ENCODE measurements at regions of chr11 and their contacts with region 1.

Region 1: GRCh38 chr11:6667733-6668374 is 12.2 kb upstream of the DCHS1 start:
- DNase-seq: peak in 1 of 2 experiments; percentile 45
- H3K4me3 ChIP-seq: no peak overlapping the region
- H3K4me3 Mint-ChIP-seq: no peak overlapping the region
- H3K27ac Mint-ChIP-seq: no peak overlapping the region
- H3K4me1 ChIP-seq: no peaks in the 10 kb centered on the region
- H3K4me1 Mint-ChIP-seq: no peaks in the 10 kb centered on the region
- H3K27me3 ChIP-seq: no peaks in the 10 kb centered on the region
- H3K27me3 Mint-ChIP-seq: peaks cover 15% of the 10 kb centered on the region
- CTCF ChIP-seq: peak; percentile 62 to 64

Region 2: DNA sequence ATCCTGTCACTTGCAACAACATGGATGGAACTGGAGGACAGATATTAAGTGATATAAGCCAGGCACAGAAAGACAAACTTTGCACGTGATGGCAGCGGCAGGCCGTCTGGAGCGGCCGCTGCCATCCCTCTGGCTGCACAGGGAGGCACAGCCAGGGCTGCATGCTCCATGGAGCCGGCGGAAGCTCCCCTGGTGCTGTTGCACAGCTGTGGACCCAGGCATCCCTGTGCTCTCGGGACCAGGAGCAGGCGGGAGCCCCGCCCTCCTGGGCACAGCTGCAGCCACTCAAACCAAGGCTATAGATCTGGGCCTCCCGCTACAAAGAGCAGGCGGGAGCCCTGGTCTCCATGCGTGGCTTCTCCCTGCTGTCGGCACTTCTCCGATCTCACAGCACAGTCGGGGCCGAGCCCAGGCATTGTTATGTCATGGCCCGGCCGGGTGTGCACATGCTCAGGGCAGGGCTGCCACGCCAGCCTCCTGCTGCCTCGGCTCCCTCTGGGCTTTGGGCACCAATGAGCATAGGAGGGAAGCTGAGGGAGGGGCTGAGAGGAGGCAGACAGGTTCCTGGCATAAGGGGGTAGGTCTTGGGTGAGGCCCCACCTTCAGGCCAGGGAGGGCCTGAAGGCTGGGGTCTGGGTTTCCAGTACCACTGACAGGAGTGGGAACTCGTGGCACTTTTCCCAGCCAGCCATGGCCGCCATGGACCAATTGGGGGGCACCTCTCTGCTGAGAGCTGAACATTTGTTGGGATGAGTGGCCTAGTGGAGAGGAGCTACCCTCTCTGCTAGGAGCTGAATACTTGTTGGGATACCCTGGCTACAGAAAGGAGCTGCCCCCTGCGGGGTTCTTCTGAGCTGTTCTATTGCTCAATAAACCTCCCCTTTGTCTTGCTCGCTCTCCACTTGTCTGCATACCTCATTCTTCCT is 81.2 kb before region 1 on chr11:
- CTCF ChIA-PET with region 1: no interaction called
- POLR2A ChIA-PET with region 1: no interaction called
- intact Hi-C with region 1: no loop called
- DNase-seq: no peak
- H3K4me3 ChIP-seq: no peak overlapping the region
- H3K4me3 Mint-ChIP-seq: no peak overlapping the region
- H3K27ac Mint-ChIP-seq: no peak overlapping the region
- H3K4me1 ChIP-seq: no peaks in the 10 kb centered on the region
- H3K4me1 Mint-ChIP-seq: no peaks in the 10 kb centered on the region
- H3K27me3 ChIP-seq: no peaks in the 10 kb centered on the region
- H3K27me3 Mint-ChIP-seq: no peaks in the 10 kb centered on the region
- CTCF ChIP-seq: no peak

Region 3: GRCh38 chr11:6629892-6630633 is 37.8 kb before region 1 on chr11:
- CTCF ChIA-PET with region 1: no interaction called
- POLR2A ChIA-PET with region 1: no interaction called
- intact Hi-C with region 1: loop called (anchors 1 kb)
- DNase-seq: peak; percentile 58 to 72
- H3K4me3 ChIP-seq: peak overlapping the region; percentile 62
- H3K4me3 Mint-ChIP-seq: peak overlapping the region; percentile 72
- H3K27ac Mint-ChIP-seq: no peak overlapping the region
- H3K4me1 ChIP-seq: peaks cover 3% of the 10 kb centered on the region; the same call in 1 of the 2 replicates
- H3K4me1 Mint-ChIP-seq: no peaks in the 10 kb centered on the region
- H3K27me3 ChIP-seq: no peaks in the 10 kb centered on the region; the same call in 1 of the 2 replicates
- H3K27me3 Mint-ChIP-seq: no peaks in the 10 kb centered on the region
- CTCF ChIP-seq: no peak

Region 4: DNA sequence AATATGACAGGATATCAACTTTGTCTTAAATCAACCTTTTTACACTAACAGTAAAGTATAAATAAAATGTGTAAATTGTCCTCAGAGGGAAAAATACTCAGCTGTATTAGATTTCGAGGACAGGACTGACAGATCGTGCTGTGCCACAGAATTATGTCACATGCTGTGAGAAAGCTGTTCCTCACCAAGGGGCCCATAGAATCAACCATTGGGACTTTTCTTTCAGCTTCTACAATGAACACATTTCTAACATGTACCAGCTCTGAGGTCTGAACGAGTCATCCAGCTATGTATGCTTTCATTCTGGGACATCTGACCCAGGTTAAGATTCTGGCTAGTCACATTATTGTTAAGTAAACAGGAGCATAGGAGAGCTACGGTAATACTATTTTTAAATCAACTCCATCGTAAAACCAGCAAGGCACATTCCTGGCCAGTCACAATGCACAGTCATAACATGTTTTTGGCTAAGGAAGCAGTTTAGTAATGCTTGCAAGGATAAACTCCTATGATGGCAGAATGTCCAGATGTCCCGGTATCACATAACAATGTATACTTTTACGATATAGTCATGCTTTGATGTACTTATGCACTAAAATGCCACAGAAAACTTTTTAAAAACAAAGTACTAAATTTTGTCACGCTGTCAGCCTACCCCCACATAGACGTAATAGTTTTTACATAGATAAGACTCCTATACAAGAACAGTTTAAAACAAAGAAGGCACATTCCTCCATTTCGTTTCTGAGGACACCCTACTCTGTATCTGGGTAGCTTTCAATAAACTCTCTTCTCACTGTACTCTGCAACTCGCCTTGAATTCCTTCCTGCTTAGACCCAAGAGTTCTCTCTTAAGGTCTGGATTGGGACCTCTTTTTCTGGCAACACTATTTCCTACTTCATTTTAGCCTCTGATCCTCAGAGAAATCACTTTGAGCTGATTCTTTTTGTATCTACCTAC is 324.9 kb after region 1 on chr11:
- CTCF ChIA-PET with region 1: no interaction called
- POLR2A ChIA-PET with region 1: no interaction called
- intact Hi-C with region 1: no loop called
- DNase-seq: no peak
- H3K4me3 ChIP-seq: no peak overlapping the region
- H3K4me3 Mint-ChIP-seq: no peak overlapping the region
- H3K27ac Mint-ChIP-seq: no peak overlapping the region
- H3K4me1 ChIP-seq: no peaks in the 10 kb centered on the region
- H3K4me1 Mint-ChIP-seq: no peaks in the 10 kb centered on the region
- H3K27me3 ChIP-seq: no peaks in the 10 kb centered on the region
- H3K27me3 Mint-ChIP-seq: peaks cover 17% of the 10 kb centered on the region
- CTCF ChIP-seq: no peak

Measured in Caco-2 (cell line).